ENCODE measurements at regions of chr2 and their contacts with region 1.

Region 1: GRCh38 chr2:238784671-238785527 is 63.0 kb upstream of the TWIST2 start:
- DNase-seq: peak; percentile 56
- H3K4me3 ChIP-seq: no peak overlapping the region
- H3K27ac ChIP-seq: no peak overlapping the region
- H3K4me1 ChIP-seq: no peaks in the 10 kb centered on the region
- H3K27me3 ChIP-seq: no peaks in the 10 kb centered on the region
- CTCF ChIP-seq: peak; percentile 76 to 85 (median 84)
- POLR2A ChIP-seq: no peak

Region 2: GRCh38 chr2:238370823-238371372 is 414.0 kb before region 1 on chr2:
- intact Hi-C with region 1: loop called (anchors 2 kb)
- DNase-seq: peak; percentile 53
- H3K4me3 ChIP-seq: no peak overlapping the region
- H3K27ac ChIP-seq: peak overlapping the region in 1 of 2 donors; percentile 16
- H3K4me1 ChIP-seq: no peaks in the 10 kb centered on the region
- H3K27me3 ChIP-seq: no peaks in the 10 kb centered on the region
- CTCF ChIP-seq: peak in 3 of 4 experiments; percentile 79 to 87 (median 82)
- POLR2A ChIP-seq: no peak

Region 3: DNA sequence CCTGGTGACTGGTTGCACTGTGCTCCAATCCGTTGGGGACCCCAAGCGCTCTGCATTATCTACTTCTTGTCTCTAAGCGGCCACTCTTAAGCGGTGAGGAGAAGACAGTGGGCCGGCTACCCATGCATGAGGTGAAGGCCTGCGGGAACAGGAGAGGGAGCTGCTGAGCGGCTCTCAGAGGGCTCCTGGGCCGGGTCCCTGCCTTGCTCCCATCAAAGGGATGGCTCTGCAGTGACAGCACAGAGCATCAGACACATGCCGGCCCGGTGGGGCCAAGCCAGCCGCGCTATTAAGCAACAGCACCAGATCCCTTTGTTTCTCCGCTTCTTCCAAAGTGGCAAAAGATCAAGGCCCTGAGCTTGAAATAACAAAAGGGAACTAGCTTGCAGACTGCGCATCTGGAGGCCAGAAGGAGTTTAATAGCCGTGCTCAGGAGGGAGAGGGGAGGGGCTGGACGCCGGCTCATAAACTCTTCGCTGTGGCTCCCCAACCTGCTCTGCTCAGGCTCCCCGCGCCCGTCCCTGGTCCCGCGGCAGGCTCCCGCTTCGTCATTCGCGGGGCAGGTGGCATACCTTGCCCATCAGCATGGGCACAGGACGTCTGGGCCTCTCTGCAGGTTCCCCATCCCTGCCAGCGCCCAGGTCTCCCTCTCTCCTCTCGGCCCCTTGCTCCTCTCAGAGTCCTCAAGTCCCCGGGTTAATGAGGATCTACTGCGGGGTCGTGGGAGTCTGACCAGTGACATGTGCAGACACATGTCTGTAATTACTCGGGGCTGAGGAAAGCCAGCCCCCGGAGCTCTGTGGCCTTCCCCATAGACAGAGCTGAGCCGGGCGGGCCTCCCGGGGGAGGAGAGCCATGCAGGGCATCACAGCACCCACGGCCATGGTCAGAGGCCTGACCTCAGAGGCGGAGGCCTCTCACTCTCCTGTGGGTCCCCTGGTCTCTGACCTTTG is 261.5 kb before region 1 on chr2:
- intact Hi-C with region 1: loop called (anchors 2 kb)
- DNase-seq: peak; percentile 58
- H3K4me3 ChIP-seq: no peak overlapping the region
- H3K27ac ChIP-seq: peak overlapping the region in 1 of 2 donors; percentile 25
- H3K4me1 ChIP-seq: peaks cover 7% of the 10 kb centered on the region
- H3K27me3 ChIP-seq: no peaks in the 10 kb centered on the region
- CTCF ChIP-seq: peak in 3 of 4 experiments; percentile 18 to 49 (median 39)
- POLR2A ChIP-seq: no peak

Region 4: DNA sequence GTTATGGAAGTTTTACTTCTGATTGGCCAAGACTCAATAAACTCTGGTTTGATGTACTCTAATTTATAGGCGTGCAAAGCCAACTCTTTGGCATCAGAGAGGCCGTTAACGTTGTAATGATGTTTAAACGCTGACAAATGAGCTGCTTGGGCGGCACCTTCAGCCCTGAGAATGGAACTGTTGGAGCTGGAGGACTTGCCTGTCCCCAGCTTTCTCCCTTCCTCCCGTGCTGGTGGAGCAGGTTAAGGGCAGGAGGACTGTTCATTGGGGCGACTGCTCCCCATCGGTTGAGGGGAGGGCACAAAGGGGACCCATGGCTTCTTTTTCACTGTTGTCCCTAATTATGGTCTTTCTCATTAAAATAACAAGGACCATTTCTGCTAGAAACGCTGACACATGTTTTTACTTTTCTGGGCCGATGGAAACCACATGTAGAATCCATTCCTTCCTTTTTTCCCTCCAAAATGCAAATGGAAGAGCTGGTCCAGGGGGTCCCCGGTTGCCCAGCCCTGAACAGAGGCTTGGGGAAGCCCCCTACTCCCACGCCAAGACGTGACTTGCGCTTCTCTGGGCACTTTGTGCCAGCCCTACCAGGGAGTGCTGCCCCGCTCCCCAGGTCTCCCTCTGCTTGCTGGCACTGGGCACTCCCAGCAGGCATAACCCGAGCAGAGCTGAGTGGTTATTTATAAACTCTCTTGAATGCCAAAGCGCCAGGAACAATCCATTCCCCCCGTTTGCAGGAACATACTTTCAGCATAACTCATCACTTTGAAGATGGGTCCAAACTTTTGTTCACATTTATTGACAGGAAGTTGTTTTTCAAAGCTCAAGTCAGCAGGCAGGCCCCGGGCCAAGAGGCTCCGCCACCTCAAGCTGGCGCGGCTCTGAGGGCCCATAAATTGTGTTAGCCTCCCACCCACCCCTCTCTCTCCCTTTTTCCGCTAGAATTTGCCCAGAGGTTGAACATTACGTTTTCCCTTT is 188.0 kb before region 1 on chr2:
- intact Hi-C with region 1: loop called (anchors 10 kb)
- DNase-seq: peak; percentile 90
- H3K4me3 ChIP-seq: no peak overlapping the region
- H3K27ac ChIP-seq: peak overlapping the region; percentile 76 to 88
- H3K4me1 ChIP-seq: peaks cover 14% of the 10 kb centered on the region
- H3K27me3 ChIP-seq: no peaks in the 10 kb centered on the region
- CTCF ChIP-seq: peak in 1 of 4 experiments; percentile 21
- POLR2A ChIP-seq: peak; percentile 19

Region 5: DNA sequence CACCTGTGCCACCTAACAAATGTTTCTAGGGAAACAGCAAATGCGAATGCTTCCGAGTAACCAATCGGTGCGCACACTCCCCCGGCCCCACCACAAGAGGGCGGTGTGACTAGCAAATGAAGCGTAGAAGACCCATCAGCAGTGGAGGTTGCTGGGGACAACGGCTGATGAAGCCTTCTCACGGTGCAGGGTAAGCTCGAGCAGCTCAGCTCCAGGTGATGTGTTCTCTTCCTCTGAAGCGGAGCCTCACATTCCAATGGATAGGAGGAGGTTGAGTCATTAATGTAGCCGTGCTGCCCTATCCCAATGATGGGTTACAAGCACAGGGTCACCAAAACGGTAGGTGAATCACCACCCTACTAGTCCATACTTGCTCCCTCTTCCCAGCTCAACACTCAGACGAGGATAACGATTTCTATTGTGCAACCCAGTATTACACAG is 64.6 kb before region 1 on chr2:
- intact Hi-C with region 1: loop called (anchors 2 kb)
- DNase-seq: no peak
- H3K4me3 ChIP-seq: no peak overlapping the region
- H3K27ac ChIP-seq: no peak overlapping the region
- H3K4me1 ChIP-seq: no peaks in the 10 kb centered on the region
- H3K27me3 ChIP-seq: no peaks in the 10 kb centered on the region
- CTCF ChIP-seq: peak in 3 of 4 experiments; percentile 35 to 65 (median 51)
- POLR2A ChIP-seq: no peak

Region 6: GRCh38 chr2:238945433-238946150 is 160.7 kb after region 1 on chr2:
- intact Hi-C with region 1: loop called (anchors 10 kb)
- DNase-seq: no peak
- H3K4me3 ChIP-seq: no peak overlapping the region
- H3K27ac ChIP-seq: no peak overlapping the region
- H3K4me1 ChIP-seq: no peaks in the 10 kb centered on the region
- H3K27me3 ChIP-seq: no peaks in the 10 kb centered on the region
- CTCF ChIP-seq: peak; percentile 38 to 64 (median 50)
- POLR2A ChIP-seq: no peak